RWPE1 (cell line): ENCODE measurements at regions of chr21 and their contacts with region 1.

Region 1: GRCh38 chr21:41612674-41613532 is 104.9 kb upstream of the TMPRSS2 start:
- DNase-seq: peak; percentile 91
- H3K27ac ChIP-seq: peak overlapping the region; percentile 100
- CTCF ChIP-seq: peak; percentile 85

Region 2: GRCh38 chr21:41678944-41679343 is 66.0 kb after region 1 on chr21:
- CTCF ChIA-PET with region 1: interaction called, 30 read pairs
- POLR2A ChIA-PET with region 1: no interaction called
- DNase-seq: peak; percentile 97
- H3K27ac ChIP-seq: peak overlapping the region; percentile 100
- CTCF ChIP-seq: no peak

Region 3: GRCh38 chr21:41768437-41769061 is 155.6 kb after region 1 on chr21:
- CTCF ChIA-PET with region 1: interaction called, 41 read pairs
- POLR2A ChIA-PET with region 1: no interaction called
- DNase-seq: peak; percentile 70
- H3K27ac ChIP-seq: peak overlapping the region; percentile 90
- CTCF ChIP-seq: no peak; the same call in 1 of the 2 replicates

Region 4: GRCh38 chr21:41777951-41778874 is 165.3 kb after region 1 on chr21:
- CTCF ChIA-PET with region 1: interaction called, 39 read pairs
- POLR2A ChIA-PET with region 1: no interaction called
- DNase-seq: peak; percentile 67
- H3K27ac ChIP-seq: peak overlapping the region; percentile 86
- CTCF ChIP-seq: peak; percentile 92

Region 5: DNA sequence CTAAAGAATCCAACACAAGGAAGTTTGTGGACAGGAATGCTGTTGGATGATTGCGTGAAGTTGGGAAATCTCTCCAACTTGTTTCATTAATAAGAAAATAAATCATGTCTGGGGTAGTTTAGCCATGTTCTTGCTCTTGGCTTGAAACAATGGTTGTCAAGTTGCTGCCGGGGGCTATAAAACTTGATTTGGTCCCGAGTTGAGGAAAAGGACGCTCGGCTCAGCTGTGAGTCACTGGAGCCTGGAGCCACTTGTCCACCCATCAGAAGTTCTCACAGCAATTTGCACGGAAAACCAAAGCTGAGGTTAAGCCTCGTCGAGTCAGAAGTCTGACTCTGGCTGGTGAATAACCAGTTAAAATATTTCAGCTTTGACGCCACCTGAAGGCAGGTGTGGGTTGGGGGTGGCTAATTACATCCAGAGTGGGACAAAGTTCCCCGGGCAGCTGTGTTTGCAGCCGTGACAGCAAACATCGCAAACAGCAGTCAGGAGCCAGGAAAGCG is 173.6 kb after region 1 on chr21:
- CTCF ChIA-PET with region 1: interaction called, 10 read pairs
- POLR2A ChIA-PET with region 1: no interaction called
- DNase-seq: peak; percentile 87
- H3K27ac ChIP-seq: peak overlapping the region; percentile 92
- CTCF ChIP-seq: no peak

Region 6: DNA sequence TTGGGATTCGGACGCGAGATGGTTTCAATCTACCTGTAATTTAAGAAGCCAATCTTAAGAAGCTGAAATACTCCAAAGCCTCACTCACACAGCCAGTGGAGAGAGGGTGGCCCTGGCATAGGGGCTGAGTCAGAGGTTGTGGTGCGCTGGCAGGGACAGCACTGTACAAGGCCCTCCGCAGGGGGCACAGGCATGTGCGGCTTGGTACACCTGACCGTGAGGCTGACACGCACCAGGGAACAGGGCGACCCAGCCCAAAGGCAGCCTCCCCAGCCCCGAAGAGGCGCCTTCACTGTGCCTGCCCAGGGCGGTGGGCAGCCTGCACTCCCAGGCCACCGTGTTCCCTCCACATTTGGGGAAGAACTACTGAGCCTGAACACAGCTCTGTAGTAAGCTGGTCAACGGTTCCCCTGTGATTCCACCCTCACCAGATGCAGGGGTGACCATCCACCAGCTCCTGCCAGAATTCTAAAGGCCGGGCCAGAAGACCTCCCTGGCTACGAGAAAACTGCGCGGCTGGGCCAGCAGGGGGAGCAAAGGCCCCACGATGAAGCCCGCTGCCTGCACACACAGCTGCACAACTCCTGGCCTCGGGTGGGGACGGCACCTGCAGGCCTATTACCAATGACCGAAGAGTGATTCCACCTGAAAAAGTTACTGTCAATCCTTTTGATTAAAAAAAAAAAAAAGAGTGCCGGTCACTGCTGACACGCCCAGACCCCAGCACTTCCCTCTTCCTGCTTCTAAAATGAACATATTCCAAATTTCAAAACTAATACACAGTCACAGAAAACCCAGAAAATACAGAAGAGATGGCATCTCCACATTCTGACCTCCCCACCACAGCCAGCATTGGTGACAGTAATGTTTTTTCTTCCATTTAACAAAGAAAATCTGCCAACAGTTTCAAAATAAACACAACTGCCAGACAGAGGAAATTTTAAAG is 203.6 kb after region 1 on chr21:
- CTCF ChIA-PET with region 1: interaction called, 22 read pairs
- POLR2A ChIA-PET with region 1: no interaction called
- DNase-seq: peak; percentile 24
- H3K27ac ChIP-seq: peak overlapping the region; percentile 50
- CTCF ChIP-seq: peak; percentile 39; the same call in 1 of the 2 replicates